Activated CD4-positive, alpha-beta T cell treated with anti-CD3 and anti-CD28 coated beads, Interleukin-2, amount 10 ng/mL, durations not matched to agents 24 days and 14 days (primary cell): ENCODE measurements at regions of chr14 and their contacts with region 1.

Region 1: GRCh38 chr14:91303091-91303923 is 58.8 kb upstream of the GPR68 start:
- DNase-seq: peak; percentile 86
- H3K4me3 Mint-ChIP-seq: peak overlapping the region; percentile 54
- H3K27ac Mint-ChIP-seq: peak overlapping the region; percentile 92
- H3K4me1 Mint-ChIP-seq: peaks cover 52% of the 10 kb centered on the region
- H3K27me3 Mint-ChIP-seq: no peaks in the 10 kb centered on the region

Region 2: DNA sequence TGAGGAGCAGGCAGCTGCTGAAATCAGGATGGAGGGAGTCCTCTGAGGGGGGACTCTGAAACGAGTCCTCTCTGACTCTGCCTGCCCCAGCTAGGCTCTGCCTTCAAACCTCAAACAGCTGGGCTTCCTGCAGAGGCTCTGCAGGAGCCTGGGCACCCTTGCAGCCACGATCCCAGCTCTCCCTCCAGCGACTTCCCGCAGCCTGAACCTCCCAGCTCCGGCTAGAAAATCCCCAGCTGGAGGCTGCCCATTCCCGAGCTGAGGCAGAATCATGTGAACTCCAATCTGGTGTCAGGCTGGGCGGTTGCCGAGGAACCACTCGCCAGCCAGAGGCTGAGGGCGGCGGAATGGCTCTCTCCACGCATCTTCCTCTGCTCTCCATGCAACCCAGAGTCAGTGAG is 58.8 kb before region 1 on chr14 and contains the start of gene GPR68:
- intact Hi-C with region 1: loop called (anchors 2 kb)
- DNase-seq: peak; percentile 84
- H3K4me3 Mint-ChIP-seq: peak within 1 kb of the TSS; percentile 84
- H3K27ac Mint-ChIP-seq: peak within 1 kb of the TSS; percentile 91
- H3K4me1 Mint-ChIP-seq: peaks cover 82% of the 10 kb centered on the region
- H3K27me3 Mint-ChIP-seq: no peaks in the 10 kb centered on the region
- total RNA-seq, gene GPR68: 4.6 and 4.9 TPM in 2 replicates